CD4-positive, alpha-beta memory T cell (primary cell): ENCODE measurements at regions of chrX and their contacts with region 1.

Region 1: GRCh38 chrX:48574270-48575266 is at the start of gene RBM3:
- DNase-seq: peak; percentile 90 to 97 (median 95)
- H3K4me3 ChIP-seq: peak within 1 kb of the TSS; percentile 42 to 81
- H3K4me3 Mint-ChIP-seq: peak within 1 kb of the TSS; percentile 89 to 99 (median 97)
- H3K27ac ChIP-seq: peak within 1 kb of the TSS; percentile 96
- H3K27ac Mint-ChIP-seq: peak within 1 kb of the TSS; percentile 97 to 100 (median 98)
- H3K4me1 ChIP-seq: peaks cover 17% of the 10 kb centered on the region
- H3K4me1 Mint-ChIP-seq: peaks cover 7 to 31% (median 18%) of the 10 kb centered on the region in 4 donors
- H3K27me3 ChIP-seq: no peaks in the 10 kb centered on the region
- H3K27me3 Mint-ChIP-seq: no peaks in the 10 kb centered on the region
- total RNA-seq, gene RBM3: 169 to 173 TPM

Region 2: DNA sequence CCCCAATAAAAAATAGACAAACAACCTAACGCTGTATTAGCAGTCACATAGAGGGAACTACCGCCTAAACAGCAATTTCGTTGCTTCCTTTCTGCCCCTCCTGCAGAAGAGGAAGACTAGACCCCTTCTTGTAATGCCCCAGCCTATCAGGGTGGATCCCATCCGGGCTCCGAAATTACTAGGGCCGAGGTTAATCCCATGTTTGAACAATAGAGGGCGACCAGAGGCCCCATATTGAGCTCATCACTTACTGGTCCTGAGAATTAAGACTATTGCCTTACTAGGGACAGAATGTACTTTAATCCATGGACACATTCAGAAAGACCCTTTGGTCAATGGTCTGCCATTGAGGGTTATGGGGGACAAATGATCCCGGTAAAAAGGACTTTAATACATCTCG is 491.4 kb before region 1 on chrX:
- CTCF ChIA-PET with region 1: no interaction called
- POLR2A ChIA-PET with region 1: interaction called, 3 read pairs
- intact Hi-C with region 1: loop called (anchors 1 kb)
- DNase-seq: peak in 4 of 5 donors; percentile 38 to 49 (median 40)
- H3K4me3 ChIP-seq: no peak overlapping the region
- H3K4me3 Mint-ChIP-seq: no peak overlapping the region
- H3K27ac ChIP-seq: no peak overlapping the region
- H3K27ac Mint-ChIP-seq: no peak overlapping the region
- H3K4me1 ChIP-seq: no peaks in the 10 kb centered on the region
- H3K4me1 Mint-ChIP-seq: no peaks in the 10 kb centered on the region
- H3K27me3 ChIP-seq: no peaks in the 10 kb centered on the region
- H3K27me3 Mint-ChIP-seq: no peaks in the 10 kb centered on the region

Region 3: GRCh38 chrX:48475774-48476577 is 98.6 kb before region 1 on chrX and contains the start of gene FTSJ1:
- CTCF ChIA-PET with region 1: no interaction called
- POLR2A ChIA-PET with region 1: interaction called, 9 read pairs
- intact Hi-C with region 1: loop called (anchors 1 kb)
- DNase-seq: peak; percentile 87 to 96 (median 92)
- H3K4me3 ChIP-seq: peak within 1 kb of the TSS; percentile 57 to 79
- H3K4me3 Mint-ChIP-seq: peak within 1 kb of the TSS; percentile 79 to 92 (median 90)
- H3K27ac ChIP-seq: peak within 1 kb of the TSS; percentile 80
- H3K27ac Mint-ChIP-seq: peak within 1 kb of the TSS; percentile 78 to 95 (median 92)
- H3K4me1 ChIP-seq: peaks cover 24% of the 10 kb centered on the region
- H3K4me1 Mint-ChIP-seq: peaks cover 16 to 24% (median 22%) of the 10 kb centered on the region in 4 donors
- H3K27me3 ChIP-seq: no peaks in the 10 kb centered on the region
- H3K27me3 Mint-ChIP-seq: no peaks in the 10 kb centered on the region
- total RNA-seq, gene FTSJ1: 48.1 to 54.1 TPM

Region 4: DNA sequence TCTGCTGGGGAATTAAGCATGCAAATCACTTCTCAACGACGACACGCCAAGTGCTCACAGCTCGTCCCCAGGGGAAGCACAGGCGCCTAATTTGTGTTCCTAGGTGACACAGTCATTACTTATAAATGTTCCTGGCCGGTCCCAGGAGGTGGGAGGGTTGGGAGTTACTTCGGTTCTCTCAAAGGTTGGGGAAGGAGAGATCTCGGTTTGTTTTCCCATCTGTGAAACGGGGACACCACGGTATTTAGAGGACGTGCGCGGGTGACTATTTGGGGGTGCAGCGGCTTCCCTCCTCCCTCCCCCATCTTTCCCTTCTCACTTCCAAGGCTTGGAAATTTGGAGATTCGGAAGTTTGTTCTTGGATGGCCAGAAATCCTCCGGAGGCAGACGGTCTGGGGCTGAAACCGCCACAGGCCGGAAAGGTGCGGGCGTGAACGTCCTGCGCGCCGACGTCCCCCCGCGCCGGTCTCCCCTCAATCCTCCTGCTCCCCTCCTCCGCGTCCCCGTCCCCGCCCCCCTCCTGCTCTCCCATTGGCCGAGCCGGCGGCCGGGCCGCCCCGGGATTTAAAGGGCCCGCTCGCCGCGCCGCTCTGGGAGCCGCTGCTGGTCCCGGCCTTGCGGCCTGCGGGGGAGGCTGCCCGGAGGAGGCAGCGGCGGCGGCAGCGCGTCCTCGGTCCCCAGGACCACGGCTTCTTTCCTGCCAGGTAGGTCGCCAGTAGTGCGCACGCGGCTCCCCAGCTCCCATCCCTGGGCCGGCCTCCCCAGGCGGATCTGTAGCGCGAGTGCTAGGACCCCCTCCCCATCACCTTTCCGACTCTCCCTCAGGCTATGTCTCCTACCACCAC is 65.9 kb before region 1 on chrX and contains the start of gene PORCN:
- CTCF ChIA-PET with region 1: no interaction called
- POLR2A ChIA-PET with region 1: interaction called, 10 read pairs
- intact Hi-C with region 1: no loop called
- DNase-seq: peak; percentile 62 to 78 (median 65)
- H3K4me3 ChIP-seq: peak within 1 kb of the TSS; percentile 61 to 64
- H3K4me3 Mint-ChIP-seq: peak within 1 kb of the TSS; percentile 87 to 91 (median 88)
- H3K27ac ChIP-seq: peak within 1 kb of the TSS; percentile 78
- H3K27ac Mint-ChIP-seq: peak within 1 kb of the TSS; percentile 70 to 96 (median 91)
- H3K4me1 ChIP-seq: peaks cover 16% of the 10 kb centered on the region
- H3K4me1 Mint-ChIP-seq: peaks cover 10 to 23% (median 12%) of the 10 kb centered on the region in 4 donors
- H3K27me3 ChIP-seq: no peaks in the 10 kb centered on the region
- H3K27me3 Mint-ChIP-seq: no peaks in the 10 kb centered on the region
- total RNA-seq, gene PORCN: 15.3 to 15.4 TPM

Region 5: DNA sequence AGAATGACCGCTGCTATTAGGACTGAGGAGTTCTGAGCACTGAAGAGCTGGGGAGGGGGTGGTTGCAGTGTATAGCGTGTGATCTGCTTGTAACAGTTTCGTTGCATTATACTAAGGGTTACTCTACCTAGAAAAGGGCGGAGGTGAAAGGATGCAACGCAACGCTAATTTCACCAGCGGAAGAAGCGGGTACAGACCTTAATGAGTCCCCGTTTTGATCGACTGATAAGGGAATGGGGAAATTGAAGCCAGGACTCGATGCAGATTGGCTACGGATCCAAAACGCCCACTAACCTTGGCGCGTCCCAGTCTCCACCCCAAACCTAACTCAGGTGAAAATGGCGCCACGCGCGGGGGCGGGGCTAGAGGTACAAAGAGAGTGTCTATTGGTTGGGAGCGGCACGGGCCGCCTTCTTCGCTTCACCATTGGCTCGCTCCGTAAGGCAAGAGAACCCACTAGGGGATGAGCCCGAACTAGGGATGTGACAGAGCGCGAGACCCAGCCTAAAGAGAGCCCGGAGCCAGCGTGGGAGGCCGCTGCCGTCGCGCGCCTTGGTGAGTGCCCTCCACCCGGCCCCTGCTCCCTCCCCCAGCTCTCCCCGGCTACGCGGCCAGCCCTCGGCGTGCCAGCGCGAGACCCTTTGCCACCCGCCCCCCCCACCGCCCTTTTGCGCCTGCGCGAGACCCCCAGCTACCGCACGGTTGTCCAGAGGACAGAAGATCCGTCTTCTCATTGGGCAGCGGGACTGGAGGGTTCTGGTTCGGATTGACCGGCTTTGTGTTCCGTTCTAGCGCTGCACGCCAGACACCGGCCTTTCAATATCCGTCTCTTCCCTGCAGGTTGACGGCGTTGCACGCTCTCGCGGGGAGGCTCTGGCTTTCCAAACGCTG is 53.0 kb before region 1 on chrX and contains the start of gene EBP:
- CTCF ChIA-PET with region 1: no interaction called
- POLR2A ChIA-PET with region 1: interaction called, 17 read pairs
- intact Hi-C with region 1: no loop called
- DNase-seq: peak; percentile 91 to 97 (median 95)
- H3K4me3 ChIP-seq: peak within 1 kb of the TSS; percentile 65 to 73
- H3K4me3 Mint-ChIP-seq: peak within 1 kb of the TSS; percentile 86 to 93 (median 90)
- H3K27ac ChIP-seq: peak within 1 kb of the TSS; percentile 63
- H3K27ac Mint-ChIP-seq: peak within 1 kb of the TSS; percentile 89 to 98 (median 97)
- H3K4me1 ChIP-seq: peaks cover 28% of the 10 kb centered on the region
- H3K4me1 Mint-ChIP-seq: peaks cover 16 to 40% (median 22%) of the 10 kb centered on the region in 4 donors
- H3K27me3 ChIP-seq: no peaks in the 10 kb centered on the region
- H3K27me3 Mint-ChIP-seq: no peaks in the 10 kb centered on the region
- total RNA-seq, gene EBP: 32.1 to 35.9 TPM

Region 6: DNA sequence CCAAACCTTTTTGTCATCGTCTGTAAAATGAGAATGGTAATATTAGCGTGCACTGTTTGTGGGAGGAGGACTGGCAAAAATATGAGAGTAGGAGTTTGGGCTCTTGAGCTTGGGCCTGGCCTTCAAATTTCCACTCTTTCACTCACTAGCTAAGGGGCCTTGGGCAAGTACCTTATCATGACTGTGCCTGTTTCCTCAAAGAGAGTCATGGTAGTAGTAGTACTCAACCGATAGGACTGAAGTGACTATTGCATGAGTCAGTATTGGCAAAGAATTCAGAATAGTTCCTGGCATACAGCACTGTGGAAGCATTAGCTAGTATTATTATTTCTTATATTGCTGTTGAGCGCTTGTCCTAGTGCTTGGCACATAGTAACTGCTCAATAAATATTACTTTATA is 16.3 kb before region 1 on chrX:
- CTCF ChIA-PET with region 1: no interaction called
- POLR2A ChIA-PET with region 1: no interaction called
- intact Hi-C with region 1: no loop called
- DNase-seq: no peak
- H3K4me3 ChIP-seq: no peak overlapping the region
- H3K4me3 Mint-ChIP-seq: no peak overlapping the region
- H3K27ac ChIP-seq: no peak overlapping the region
- H3K27ac Mint-ChIP-seq: no peak overlapping the region
- H3K4me1 ChIP-seq: no peaks in the 10 kb centered on the region
- H3K4me1 Mint-ChIP-seq: peaks cover 0 to 2% (median 0%) of the 10 kb centered on the region in 4 donors
- H3K27me3 ChIP-seq: no peaks in the 10 kb centered on the region
- H3K27me3 Mint-ChIP-seq: no peaks in the 10 kb centered on the region

Region 7: GRCh38 chrX:48597353-48598264 is 23.0 kb after region 1 on chrX and contains the start of gene WDR13:
- CTCF ChIA-PET with region 1: no interaction called
- POLR2A ChIA-PET with region 1: interaction called, 15 read pairs
- intact Hi-C with region 1: loop called (anchors 1 kb)
- DNase-seq: peak; percentile 88 to 92 (median 91)
- H3K4me3 ChIP-seq: peak within 1 kb of the TSS; percentile 84 to 85
- H3K4me3 Mint-ChIP-seq: peak within 1 kb of the TSS; percentile 90 to 99 (median 97)
- H3K27ac ChIP-seq: peak within 1 kb of the TSS; percentile 95
- H3K27ac Mint-ChIP-seq: peak within 1 kb of the TSS; percentile 96 to 100 (median 99)
- H3K4me1 ChIP-seq: peaks cover 12% of the 10 kb centered on the region
- H3K4me1 Mint-ChIP-seq: peaks cover 7 to 17% (median 13%) of the 10 kb centered on the region in 4 donors
- H3K27me3 ChIP-seq: no peaks in the 10 kb centered on the region
- H3K27me3 Mint-ChIP-seq: no peaks in the 10 kb centered on the region
- total RNA-seq, gene WDR13: 47.4 to 49.7 TPM

Region 8: DNA sequence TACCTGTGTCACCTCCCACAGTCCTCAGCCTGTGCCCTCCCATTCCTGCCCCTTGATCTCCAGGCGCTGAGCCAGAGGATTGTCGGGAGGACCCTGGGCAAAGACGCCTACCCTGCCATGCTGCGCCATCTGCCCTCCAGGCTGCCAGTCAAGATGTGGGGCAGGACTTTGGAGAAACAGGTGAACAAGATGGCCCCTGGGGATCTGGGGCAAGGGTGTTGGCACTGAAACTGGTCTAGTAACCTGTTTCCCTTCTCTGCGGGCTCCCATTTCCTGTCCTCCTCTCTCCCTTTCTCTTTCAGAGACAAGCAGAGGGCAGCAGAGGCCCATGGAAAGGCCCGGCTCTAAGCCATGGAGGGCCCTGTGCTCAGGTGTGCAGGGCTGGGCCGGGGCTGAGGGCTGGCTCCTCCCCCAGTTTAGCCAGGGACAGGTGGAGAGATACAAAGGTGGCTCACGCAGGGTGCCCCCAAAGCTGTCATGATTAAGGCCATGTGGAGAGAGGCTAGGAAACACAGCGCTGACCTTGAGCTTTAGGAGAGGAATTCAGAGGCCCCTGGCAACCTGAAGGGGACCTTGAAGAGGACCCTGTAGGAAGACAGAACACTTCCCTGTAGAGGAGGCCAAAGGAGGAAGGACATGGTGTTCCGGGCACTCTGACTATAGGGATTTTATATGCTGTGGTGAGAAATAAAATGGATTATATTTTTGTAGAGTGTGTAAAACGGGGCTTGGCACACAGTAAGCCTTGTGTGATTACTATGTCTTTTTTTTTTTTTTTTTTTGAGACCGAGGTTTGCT is 187.3 kb after region 1 on chrX and contains the start of gene GLOD5:
- CTCF ChIA-PET with region 1: no interaction called
- POLR2A ChIA-PET with region 1: no interaction called
- intact Hi-C with region 1: no loop called
- DNase-seq: no peak
- H3K4me3 ChIP-seq: no peak within 1 kb of the TSS
- H3K4me3 Mint-ChIP-seq: no peak within 1 kb of the TSS
- H3K27ac ChIP-seq: no peak within 1 kb of the TSS
- H3K27ac Mint-ChIP-seq: no peak within 1 kb of the TSS
- H3K4me1 ChIP-seq: no peaks in the 10 kb centered on the region
- H3K4me1 Mint-ChIP-seq: peaks cover 0 to 7% (median 1%) of the 10 kb centered on the region in 4 donors
- H3K27me3 ChIP-seq: no peaks in the 10 kb centered on the region
- H3K27me3 Mint-ChIP-seq: peaks cover 0 to 2% of the 10 kb centered on the region in 2 donors
- total RNA-seq, gene GLOD5: not detected